Left ventricle myocardium superior (tissue), 1 donor: ENCODE measurements at regions of chr3 and their contacts with region 1.

Region 1: DNA sequence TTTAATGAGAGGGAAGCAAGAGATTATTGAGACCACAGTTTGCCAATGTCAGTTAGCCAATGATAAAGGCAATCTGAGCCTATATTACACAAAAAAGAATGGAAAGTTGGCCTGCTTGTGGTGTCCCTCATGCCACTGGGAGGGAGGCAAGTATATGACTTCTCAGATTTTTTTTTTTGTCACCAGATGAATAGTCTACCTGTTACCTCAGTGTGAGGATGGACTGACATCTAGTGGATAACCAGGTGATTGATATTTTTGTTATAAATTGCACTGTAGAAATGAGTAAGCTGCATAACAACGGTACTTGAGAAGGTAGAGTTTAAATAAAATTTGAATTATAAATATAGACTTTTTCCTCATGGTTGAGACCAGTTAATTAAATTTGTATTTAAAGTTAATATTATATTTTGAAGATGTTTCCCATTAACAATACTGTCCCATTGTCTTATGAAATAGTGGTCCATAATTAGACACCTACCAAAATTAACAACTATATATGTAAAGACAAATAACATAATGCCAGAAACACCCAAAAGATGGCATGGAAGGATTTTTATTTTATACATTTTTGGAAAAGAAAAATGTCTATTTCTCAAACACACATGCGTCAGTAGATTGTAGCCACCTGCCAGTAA is 237.8 kb upstream of the GADL1 start:
- DNase-seq: no peak
- ATAC-seq: peak; percentile 36

Region 2: GRCh38 chr3:30779686-30780287 is 352.5 kb before region 1 on chr3:
- intact Hi-C with region 1: loop called (anchors 10 kb)
- DNase-seq: no peak
- ATAC-seq: peak; percentile 23